ENCODE measurements at regions of chr21 and their contacts with region 1.

Region 1: GRCh38 chr21:36246080-36246631 is 73.8 kb upstream of the MORC3 start:
- DNase-seq: no peak
- H3K4me3 ChIP-seq: no peak overlapping the region
- H3K27ac ChIP-seq: no peak overlapping the region
- H3K4me1 ChIP-seq: peaks cover 3 to 10% (median 6%) of the 10 kb centered on the region in 4 experiments
- H3K27me3 ChIP-seq: no peaks in the 10 kb centered on the region
- CTCF ChIP-seq: no peak
- EP300 ChIP-seq: no peak
- POLR2A ChIP-seq: no peak
- RAD21 ChIP-seq: no peak

Region 2: GRCh38 chr21:36260030-36260787 is 14.1 kb after region 1 on chr21:
- CTCF ChIA-PET with region 1: interaction called, 54 read pairs
- POLR2A ChIA-PET with region 1: interaction called, 3 read pairs
- DNase-seq: no peak
- H3K4me3 ChIP-seq: 0 out of 8 replicates have a peak overlapping the region, but pooled peaks of 1 of the 4 experiments have one; percentile 28
- H3K27ac ChIP-seq: no peak overlapping the region
- H3K4me1 ChIP-seq: no peaks in the 10 kb centered on the region
- H3K27me3 ChIP-seq: no peaks in the 10 kb centered on the region
- CTCF ChIP-seq: peak in 2 of 3 experiments; percentile 36 to 63; a peak in 2 of 4 replicates
- EP300 ChIP-seq: no peak
- POLR2A ChIP-seq: no peak
- RAD21 ChIP-seq: peak in 1 of 2 experiments; percentile 22; a peak in 1 of 4 replicates

Region 3: DNA sequence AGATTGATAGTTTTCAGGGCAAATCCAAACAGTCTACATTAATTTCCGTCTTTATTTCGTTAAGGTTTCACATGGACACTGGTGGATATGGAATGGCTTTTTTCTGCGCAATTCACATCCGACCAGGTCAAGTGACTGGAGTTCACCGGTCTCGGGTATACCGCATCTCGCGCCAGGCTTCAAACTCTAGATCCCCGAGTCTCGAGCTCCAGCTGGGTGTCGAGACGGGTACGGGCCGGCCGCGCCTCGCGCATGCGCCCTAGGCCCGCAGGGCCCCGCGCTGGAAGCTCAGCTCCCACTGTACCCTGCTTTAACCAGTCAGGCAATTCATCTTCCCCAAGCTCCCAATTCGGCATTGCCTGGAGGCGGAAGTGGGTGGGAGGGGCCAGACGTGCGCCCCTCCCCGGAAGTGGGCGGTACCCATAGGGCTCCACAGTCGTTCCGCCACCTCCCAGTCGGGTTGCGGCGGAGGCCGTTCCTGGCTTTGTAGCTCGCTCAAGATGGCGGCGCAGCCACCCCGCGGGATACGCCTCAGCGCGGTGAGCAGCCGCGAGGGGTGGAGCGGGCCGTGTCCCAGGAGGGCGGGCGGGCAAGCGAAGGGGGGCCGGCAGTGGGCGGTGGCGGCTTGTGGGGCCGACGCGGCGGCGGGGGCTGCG is 73.7 kb after region 1 on chr21 and contains the start of gene MORC3:
- CTCF ChIA-PET with region 1: interaction called, 13 read pairs
- POLR2A ChIA-PET with region 1: interaction called, 7 read pairs
- DNase-seq: peak; percentile 97 to 99
- H3K4me3 ChIP-seq: peak within 1 kb of the TSS; percentile 77 to 97 (median 83)
- H3K27ac ChIP-seq: peak within 1 kb of the TSS; percentile 29; the same call in 1 of the 2 replicates
- H3K4me1 ChIP-seq: peaks cover 0 to 7% (median 2%) of the 10 kb centered on the region in 4 experiments; a peak in 4 of 7 replicates
- H3K27me3 ChIP-seq: no peaks in the 10 kb centered on the region
- CTCF ChIP-seq: no peak
- EP300 ChIP-seq: no peak
- POLR2A ChIP-seq: peak; percentile 59 to 95
- RAD21 ChIP-seq: no peak
- total RNA-seq, gene MORC3: 20.4 and 23.9 TPM in 2 replicates

Region 4: DNA sequence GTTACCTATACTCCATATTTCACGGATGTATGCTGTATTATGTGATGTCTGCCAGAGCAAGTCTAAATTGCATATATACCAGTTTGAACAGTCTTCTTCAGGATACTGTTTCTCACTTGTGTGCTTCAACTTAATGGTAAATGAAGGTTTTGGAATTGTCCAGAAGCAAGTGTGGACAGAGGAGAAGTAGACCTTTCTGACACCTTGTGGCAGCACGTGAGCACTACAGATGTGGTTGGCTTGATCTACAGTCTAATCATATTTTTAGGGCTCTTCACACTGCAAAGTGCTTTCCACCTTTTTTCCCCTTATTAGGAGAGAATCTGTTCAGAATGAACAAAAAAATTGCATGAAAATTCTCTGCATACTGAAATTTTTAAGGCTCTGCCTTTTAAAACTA is 84.7 kb after region 1 on chr21:
- CTCF ChIA-PET with region 1: interaction called, 28 read pairs
- POLR2A ChIA-PET with region 1: no interaction called
- DNase-seq: no peak
- H3K4me3 ChIP-seq: no peak overlapping the region
- H3K27ac ChIP-seq: no peak overlapping the region
- H3K4me1 ChIP-seq: no peaks in the 10 kb centered on the region
- H3K27me3 ChIP-seq: no peaks in the 10 kb centered on the region
- CTCF ChIP-seq: peak in 2 of 3 experiments; percentile 66 to 81; a peak in 3 of 4 replicates
- EP300 ChIP-seq: no peak
- POLR2A ChIP-seq: no peak
- RAD21 ChIP-seq: peak; percentile 76 to 77

Measured in H1 (cell line).